GM23248 (cell line): ENCODE measurements at regions of chr17 and their contacts with region 1.

Region 1: GRCh38 chr17:62008294-62008693 is 56.8 kb downstream of the MED13 start:
- DNase-seq: no peak
- H3K4me3 ChIP-seq: no peak overlapping the region
- H3K27ac ChIP-seq: no peak overlapping the region
- H3K4me1 ChIP-seq: no peaks in the 10 kb centered on the region
- H3K27me3 ChIP-seq: no peaks in the 10 kb centered on the region

Region 2: GRCh38 chr17:62065598-62066468 is 57.5 kb after region 1 on chr17:
- in situ Hi-C with region 1: loop called (anchors 10 kb)
- DNase-seq: peak; percentile 99
- H3K4me3 ChIP-seq: peak overlapping the region; percentile 93
- H3K27ac ChIP-seq: peak overlapping the region; percentile 96
- H3K4me1 ChIP-seq: peaks cover 24% of the 10 kb centered on the region
- H3K27me3 ChIP-seq: no peaks in the 10 kb centered on the region

Region 3: DNA sequence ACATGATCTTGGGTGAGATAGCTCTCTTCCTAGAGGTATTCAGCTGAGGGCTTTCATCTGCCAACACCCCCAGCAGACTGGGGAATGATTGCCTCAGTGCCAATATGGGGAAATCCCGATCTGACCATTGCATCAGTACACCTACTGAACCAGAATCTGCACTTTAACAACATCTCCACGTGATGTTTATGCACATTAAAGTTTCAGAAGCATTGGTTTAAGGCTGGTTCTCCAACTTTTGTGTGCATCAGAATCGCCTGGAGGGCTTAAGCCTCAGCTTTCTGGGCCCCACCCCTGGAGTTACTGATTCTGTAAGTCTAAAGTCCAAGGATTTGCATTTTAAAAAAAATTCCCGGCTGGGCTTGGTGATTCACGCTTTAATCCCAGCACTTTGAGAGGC is 180.4 kb after region 1 on chr17:
- in situ Hi-C with region 1: no loop called
- DNase-seq: no peak
- H3K4me3 ChIP-seq: no peak overlapping the region
- H3K27ac ChIP-seq: no peak overlapping the region
- H3K4me1 ChIP-seq: no peaks in the 10 kb centered on the region
- H3K27me3 ChIP-seq: no peaks in the 10 kb centered on the region